Dorsolateral prefrontal cortex (tissue), 120 donors: ENCODE measurements at regions of chr6 and their contacts with region 1.

Region 1: DNA sequence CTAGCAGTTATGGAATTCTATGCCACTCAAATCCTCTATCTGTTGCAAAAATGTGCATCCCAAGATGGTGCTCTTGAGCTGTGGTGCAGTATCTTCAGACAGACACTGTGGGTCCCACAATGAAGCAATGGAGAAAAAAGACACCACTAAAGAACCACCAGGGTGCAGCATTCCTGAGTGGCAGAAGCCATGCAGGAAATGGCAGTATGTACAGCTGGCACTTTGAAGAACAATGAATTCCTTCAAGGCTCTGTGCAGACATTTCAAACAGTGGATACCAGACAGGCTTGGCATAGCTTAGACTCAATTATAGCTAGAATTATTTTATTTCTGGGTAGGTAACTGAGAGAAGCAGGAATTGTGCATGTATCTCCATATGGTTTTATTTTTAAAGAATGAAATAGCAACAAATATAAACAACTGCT is 24.0 kb upstream of the HDAC2 start:
- DNase-seq: peak; percentile 13 to 88 (median 68)
- H3K4me3 ChIP-seq: peak overlapping the region in 38 of 59 donors; percentile 0 to 54 (median 26)
- H3K27ac ChIP-seq: peak overlapping the region; percentile 52 to 98 (median 93)
- H3K27me3 ChIP-seq: no peaks in the 10 kb centered on the region
- CTCF ChIP-seq: peak; percentile 32 to 98 (median 88)

Region 2: GRCh38 chr6:113924312-113924723 is 70.6 kb before region 1 on chr6:
- intact Hi-C with region 1: no loop called
- DNase-seq: no peak
- H3K4me3 ChIP-seq: no peak overlapping the region
- H3K27ac ChIP-seq: no peak overlapping the region
- H3K27me3 ChIP-seq: no peaks in the 10 kb centered on the region
- CTCF ChIP-seq: no peak

Region 3: GRCh38 chr6:114108119-114109002 is 113.4 kb after region 1 on chr6:
- intact Hi-C with region 1: loop called (anchors 1 to 5 kb)
- DNase-seq: peak; percentile 23 to 89 (median 75)
- H3K4me3 ChIP-seq: peak overlapping the region in 23 of 59 donors; percentile 2 to 46 (median 21)
- H3K27ac ChIP-seq: peak overlapping the region in 51 of 59 donors; percentile 9 to 83 (median 58)
- H3K27me3 ChIP-seq: no peaks in the 10 kb centered on the region
- CTCF ChIP-seq: peak; percentile 24 to 82 (median 69)

Region 4: GRCh38 chr6:114290864-114291263 is 295.9 kb after region 1 on chr6:
- intact Hi-C with region 1: loop called in 1 of 2 experiments (anchors 5 kb)
- DNase-seq: no peak
- H3K4me3 ChIP-seq: no peak overlapping the region
- H3K27ac ChIP-seq: peak overlapping the region in 54 of 59 donors; percentile 6 to 90 (median 82)
- H3K27me3 ChIP-seq: no peaks in the 10 kb centered on the region
- CTCF ChIP-seq: no peak

Region 5: DNA sequence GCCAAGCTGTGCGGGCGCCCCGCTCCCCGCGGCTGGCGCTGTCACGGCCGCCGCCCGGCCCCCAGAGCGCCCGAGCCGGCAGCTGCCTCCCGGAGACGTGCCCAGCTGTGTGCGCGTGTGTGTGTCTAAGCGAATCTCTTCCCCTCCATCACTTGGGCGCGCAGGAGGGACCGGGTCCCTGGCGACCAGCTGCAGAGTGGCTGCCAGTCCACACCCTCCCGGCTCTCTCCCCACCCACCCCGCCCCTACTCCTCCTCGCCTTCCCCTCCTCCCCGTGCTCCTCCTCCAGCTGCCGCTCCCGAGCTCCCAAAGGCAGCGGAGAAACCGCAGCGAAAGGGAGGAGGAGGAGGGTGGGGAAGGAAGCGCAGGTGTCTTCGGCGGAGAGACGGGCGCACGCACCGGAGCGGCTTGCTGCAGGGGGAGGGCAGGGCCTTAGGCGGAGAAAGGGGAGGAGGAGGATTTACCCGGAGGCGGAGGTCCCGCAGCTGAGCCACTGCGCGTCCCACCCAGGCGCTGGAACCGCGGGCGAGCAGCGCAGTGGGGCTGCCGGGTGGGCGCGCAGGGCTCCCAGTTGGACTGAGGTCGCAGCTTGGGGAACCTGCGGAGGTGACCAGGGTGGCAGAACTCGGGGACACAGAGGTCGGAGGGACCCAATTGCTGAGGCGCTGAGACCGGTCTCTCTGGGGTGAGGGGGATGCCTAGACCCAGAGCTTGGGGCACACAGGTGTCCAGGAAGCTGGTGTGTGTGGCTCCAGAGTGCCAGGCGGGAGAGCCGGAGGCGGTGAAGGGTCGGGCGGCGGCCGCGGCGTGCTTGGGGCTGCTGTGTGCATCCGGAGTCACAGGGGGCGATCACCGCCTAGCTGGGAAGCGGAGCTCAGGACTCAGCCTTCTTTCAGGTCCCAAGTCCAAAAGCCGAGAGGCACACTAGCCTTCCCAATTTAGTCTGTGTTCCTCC is 348.2 kb after region 1 on chr6 and contains the start of gene HS3ST5:
- intact Hi-C with region 1: loop called (anchors 5 to 10 kb)
- DNase-seq: peak; percentile 14 to 79 (median 71)
- H3K4me3 ChIP-seq: peak within 1 kb of the TSS; percentile 45 to 91 (median 80)
- H3K27ac ChIP-seq: peak within 1 kb of the TSS; percentile 36 to 97 (median 91)
- H3K27me3 ChIP-seq: no peaks in the 10 kb centered on the region
- CTCF ChIP-seq: peak in 52 of 56 donors; percentile 19 to 69 (median 50)
- total RNA-seq, gene HS3ST5: 3.0 to 17.2 (median 7.8) TPM

Region 6: GRCh38 chr6:114747987-114748630 is 753.2 kb after region 1 on chr6:
- intact Hi-C with region 1: loop called in 1 of 2 experiments (anchors 10 kb)
- DNase-seq: peak in 9 of 10 donors; percentile 7 to 76 (median 54)
- H3K4me3 ChIP-seq: peak overlapping the region in 10 of 59 donors; percentile 4 to 35 (median 23)
- H3K27ac ChIP-seq: no peak overlapping the region
- H3K27me3 ChIP-seq: no peaks in the 10 kb centered on the region
- CTCF ChIP-seq: peak; percentile 68 to 91 (median 82)

Region 7: DNA sequence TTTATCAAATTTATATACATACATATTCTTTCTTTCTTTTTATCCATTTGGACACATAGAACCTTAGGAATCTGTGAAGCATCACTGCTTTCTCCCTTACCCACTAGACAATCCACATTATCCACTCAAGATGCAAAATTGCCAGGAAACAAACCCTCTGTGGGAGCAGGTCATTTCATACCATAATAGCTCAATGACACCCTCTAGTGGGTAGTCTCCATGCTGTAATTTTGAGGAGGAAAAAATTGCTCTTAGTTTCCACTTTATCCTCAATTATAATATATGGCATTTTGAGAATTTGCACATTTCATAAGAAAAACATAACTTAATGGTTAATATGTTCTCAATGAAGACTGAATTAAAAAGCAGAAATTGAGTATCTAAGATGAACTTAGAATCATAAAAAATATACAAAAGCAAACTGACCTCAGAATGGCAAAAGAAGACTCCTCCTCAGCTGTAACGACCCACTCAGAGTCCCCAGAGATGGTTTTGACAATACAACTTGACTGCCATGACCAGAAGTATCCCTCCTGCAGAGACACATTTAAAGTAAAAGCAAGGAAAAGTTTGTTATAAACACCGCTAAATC is 1901.7 kb after region 1 on chr6:
- intact Hi-C with region 1: loop called in 1 of 2 experiments (anchors 5 kb)
- DNase-seq: no peak
- H3K4me3 ChIP-seq: no peak overlapping the region
- H3K27ac ChIP-seq: no peak overlapping the region
- H3K27me3 ChIP-seq: no peaks in the 10 kb centered on the region
- CTCF ChIP-seq: peak; percentile 37 to 89 (median 78)